Activated CD4-positive, alpha-beta memory T cell treated with anti-CD3 and anti-CD28 coated beads for 36 hours (primary cell): ENCODE measurements at regions of chr2 and their contacts with region 1.

Region 1: GRCh38 chr2:46296840-46297545 is at the start of gene EPAS1:
- DNase-seq: peak; percentile 89
- H3K4me3 Mint-ChIP-seq: peak within 1 kb of the TSS; percentile 84
- H3K27ac Mint-ChIP-seq: peak within 1 kb of the TSS; percentile 68
- H3K4me1 Mint-ChIP-seq: peaks cover 20% of the 10 kb centered on the region
- H3K27me3 Mint-ChIP-seq: peaks cover 50% of the 10 kb centered on the region
- total RNA-seq, gene EPAS1: 51.0 to 54.6 TPM

Region 2: GRCh38 chr2:46010925-46011490 is 286.0 kb before region 1 on chr2:
- CTCF ChIA-PET with region 1: interaction called, 3 read pairs
- POLR2A ChIA-PET with region 1: no interaction called
- intact Hi-C with region 1: loop called (anchors 2 kb)
- DNase-seq: no peak
- H3K4me3 Mint-ChIP-seq: no peak overlapping the region
- H3K27ac Mint-ChIP-seq: no peak overlapping the region
- H3K4me1 Mint-ChIP-seq: peaks cover 11% of the 10 kb centered on the region
- H3K27me3 Mint-ChIP-seq: no peaks in the 10 kb centered on the region

Region 3: DNA sequence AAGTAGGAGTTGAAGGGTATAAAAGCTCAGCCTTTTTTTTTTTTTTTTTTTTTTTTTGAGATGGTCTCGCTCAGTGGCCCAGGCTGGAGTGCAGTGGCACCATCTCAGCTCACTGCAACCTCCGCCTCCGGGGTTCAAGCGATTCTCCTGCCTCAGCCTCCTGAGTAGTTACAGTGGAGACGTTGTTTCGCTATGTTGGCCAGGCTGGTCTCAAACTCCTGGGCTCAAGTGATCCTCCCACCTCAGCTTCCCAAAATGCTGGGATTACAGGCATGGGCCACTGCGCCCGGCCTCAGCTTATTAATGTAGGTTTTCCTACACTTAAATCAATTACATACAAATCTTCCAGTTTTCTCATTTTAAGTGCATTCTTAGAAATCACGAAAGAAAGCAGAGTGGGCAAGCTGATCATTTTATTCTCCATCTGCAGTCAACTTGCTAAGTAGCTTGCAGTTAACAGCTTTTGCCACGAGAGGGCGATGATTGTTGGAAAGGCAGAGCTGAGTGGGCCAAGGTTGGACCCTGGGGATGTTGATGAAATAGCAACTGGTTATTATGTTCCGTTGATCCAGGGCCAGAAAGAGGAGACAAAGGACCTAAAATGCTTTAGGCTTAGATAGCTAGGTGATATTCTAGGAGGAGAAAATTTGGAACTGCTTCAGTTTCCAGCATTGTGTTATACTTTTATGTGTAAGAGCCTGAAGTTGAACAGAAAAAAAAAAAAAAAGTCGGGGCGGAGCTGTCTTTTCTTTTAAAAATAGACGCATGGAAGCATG is 234.2 kb before region 1 on chr2:
- CTCF ChIA-PET with region 1: interaction called, 19 read pairs
- POLR2A ChIA-PET with region 1: no interaction called
- intact Hi-C with region 1: loop called (anchors 2 kb)
- DNase-seq: peak; percentile 80
- H3K4me3 Mint-ChIP-seq: no peak overlapping the region
- H3K27ac Mint-ChIP-seq: no peak overlapping the region
- H3K4me1 Mint-ChIP-seq: peaks cover 21% of the 10 kb centered on the region
- H3K27me3 Mint-ChIP-seq: no peaks in the 10 kb centered on the region

Region 4: GRCh38 chr2:46187112-46187618 is 109.8 kb before region 1 on chr2:
- CTCF ChIA-PET with region 1: interaction called, 3 read pairs
- POLR2A ChIA-PET with region 1: no interaction called
- intact Hi-C with region 1: loop called (anchors 5 kb)
- DNase-seq: peak; percentile 67
- H3K4me3 Mint-ChIP-seq: no peak overlapping the region
- H3K27ac Mint-ChIP-seq: peak overlapping the region; percentile 84
- H3K4me1 Mint-ChIP-seq: peaks cover 13% of the 10 kb centered on the region
- H3K27me3 Mint-ChIP-seq: no peaks in the 10 kb centered on the region

Region 5: DNA sequence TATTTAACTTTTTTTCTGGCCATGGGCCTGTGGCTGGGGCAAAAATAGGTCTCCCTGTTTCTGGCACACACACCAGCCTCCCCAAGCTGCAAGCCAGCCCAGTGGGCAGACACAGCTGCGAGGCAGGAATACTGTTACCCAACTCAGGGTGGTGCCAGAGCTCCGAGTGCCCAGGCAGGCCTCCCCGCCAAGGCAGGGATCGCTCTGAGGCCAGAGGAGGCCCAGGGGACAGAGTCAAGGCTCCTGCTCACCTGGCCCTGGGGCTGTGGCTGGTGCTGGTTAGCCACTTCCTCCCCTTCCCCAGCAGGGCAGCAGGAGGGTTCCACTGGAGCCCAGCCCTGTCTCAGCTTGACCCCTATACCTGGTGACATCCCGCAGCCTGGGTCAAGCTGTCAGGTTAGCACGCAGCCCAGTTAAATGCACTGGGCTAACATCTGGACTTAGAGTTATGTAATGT is 66.8 kb before region 1 on chr2:
- CTCF ChIA-PET with region 1: interaction called, 7 read pairs
- POLR2A ChIA-PET with region 1: interaction called, 9 read pairs
- intact Hi-C with region 1: loop called (anchors 5 kb)
- DNase-seq: peak; percentile 50
- H3K4me3 Mint-ChIP-seq: peak overlapping the region; percentile 16
- H3K27ac Mint-ChIP-seq: peak overlapping the region; percentile 92
- H3K4me1 Mint-ChIP-seq: peaks cover 51% of the 10 kb centered on the region
- H3K27me3 Mint-ChIP-seq: no peaks in the 10 kb centered on the region

Region 6: DNA sequence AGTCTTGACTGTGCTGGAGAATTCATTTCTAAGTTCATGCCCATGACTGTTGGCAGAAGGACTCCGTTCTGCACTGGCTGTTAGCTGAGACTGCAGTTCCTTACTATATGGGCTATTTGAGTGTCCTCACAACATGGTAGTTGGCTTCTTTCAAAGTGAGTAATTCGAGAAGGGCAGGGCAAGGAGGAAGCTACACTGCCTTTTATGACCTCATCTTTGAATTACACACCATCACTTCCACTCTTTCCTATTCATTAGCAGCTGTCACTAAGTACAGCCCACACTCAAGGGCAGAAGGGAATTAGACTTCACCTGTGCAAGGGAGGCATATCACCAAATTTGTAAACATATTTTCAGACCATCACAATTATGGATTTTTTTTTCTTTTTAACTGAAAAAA is 55.6 kb before region 1 on chr2:
- CTCF ChIA-PET with region 1: no interaction called
- POLR2A ChIA-PET with region 1: interaction called, 5 read pairs
- intact Hi-C with region 1: loop called (anchors 2 kb)
- DNase-seq: no peak
- H3K4me3 Mint-ChIP-seq: no peak overlapping the region
- H3K27ac Mint-ChIP-seq: no peak overlapping the region
- H3K4me1 Mint-ChIP-seq: peaks cover 40% of the 10 kb centered on the region
- H3K27me3 Mint-ChIP-seq: no peaks in the 10 kb centered on the region

Region 7: DNA sequence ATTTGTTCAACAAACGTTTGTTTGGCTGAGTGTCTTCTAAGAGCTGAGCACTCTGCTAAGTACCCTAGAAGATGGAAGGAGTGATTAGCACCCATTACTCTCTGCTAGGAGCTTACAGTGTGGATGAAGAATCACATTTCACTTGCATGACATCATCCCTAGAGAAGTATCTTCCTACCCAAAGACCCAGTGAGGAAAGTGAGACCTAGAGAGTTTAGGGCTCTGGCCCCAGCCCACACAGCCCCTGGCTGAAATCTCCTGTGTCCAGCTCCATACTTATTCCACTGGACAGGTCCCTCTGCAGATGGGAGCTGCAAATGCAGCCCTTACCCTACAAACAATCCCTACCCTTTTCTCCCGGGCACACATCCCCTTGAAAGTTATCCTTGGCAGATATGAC is 26.6 kb before region 1 on chr2:
- CTCF ChIA-PET with region 1: no interaction called
- POLR2A ChIA-PET with region 1: no interaction called
- intact Hi-C with region 1: no loop called
- DNase-seq: no peak
- H3K4me3 Mint-ChIP-seq: no peak overlapping the region
- H3K27ac Mint-ChIP-seq: peak overlapping the region; percentile 39
- H3K4me1 Mint-ChIP-seq: peaks cover 15% of the 10 kb centered on the region
- H3K27me3 Mint-ChIP-seq: peaks cover 7% of the 10 kb centered on the region

Region 8: GRCh38 chr2:46351750-46352138 is 54.8 kb after region 1 on chr2:
- CTCF ChIA-PET with region 1: no interaction called
- POLR2A ChIA-PET with region 1: no interaction called
- intact Hi-C with region 1: loop called (anchors 5 kb)
- DNase-seq: peak; percentile 87
- H3K4me3 Mint-ChIP-seq: peak overlapping the region; percentile 75
- H3K27ac Mint-ChIP-seq: peak overlapping the region; percentile 91
- H3K4me1 Mint-ChIP-seq: peaks cover 52% of the 10 kb centered on the region
- H3K27me3 Mint-ChIP-seq: no peaks in the 10 kb centered on the region

Region 9: DNA sequence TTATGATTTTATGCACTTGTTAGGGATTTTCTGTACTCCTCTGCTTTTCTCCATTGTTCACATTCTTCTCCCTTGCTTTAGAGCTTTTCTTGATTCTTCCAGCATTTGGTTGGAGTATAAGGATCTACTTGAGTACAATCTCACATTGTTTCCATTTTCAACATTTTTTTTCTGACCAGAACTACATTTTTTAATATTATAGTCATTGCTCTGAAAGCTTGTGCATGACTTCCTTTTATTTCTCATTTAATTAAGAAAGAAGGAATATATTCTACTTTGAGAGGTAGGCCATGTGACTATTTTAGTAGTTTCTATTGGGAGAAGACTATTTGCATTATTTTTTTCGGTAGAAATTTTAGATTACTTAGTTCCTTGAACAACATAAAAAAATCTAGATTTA is 382.8 kb after region 1 on chr2:
- CTCF ChIA-PET with region 1: no interaction called
- POLR2A ChIA-PET with region 1: no interaction called
- intact Hi-C with region 1: no loop called
- DNase-seq: no peak
- H3K4me3 Mint-ChIP-seq: no peak overlapping the region
- H3K27ac Mint-ChIP-seq: no peak overlapping the region
- H3K4me1 Mint-ChIP-seq: no peaks in the 10 kb centered on the region
- H3K27me3 Mint-ChIP-seq: peaks cover 10% of the 10 kb centered on the region